ENCODE measurements at regions of chr9 and their contacts with region 1.

Region 1: DNA sequence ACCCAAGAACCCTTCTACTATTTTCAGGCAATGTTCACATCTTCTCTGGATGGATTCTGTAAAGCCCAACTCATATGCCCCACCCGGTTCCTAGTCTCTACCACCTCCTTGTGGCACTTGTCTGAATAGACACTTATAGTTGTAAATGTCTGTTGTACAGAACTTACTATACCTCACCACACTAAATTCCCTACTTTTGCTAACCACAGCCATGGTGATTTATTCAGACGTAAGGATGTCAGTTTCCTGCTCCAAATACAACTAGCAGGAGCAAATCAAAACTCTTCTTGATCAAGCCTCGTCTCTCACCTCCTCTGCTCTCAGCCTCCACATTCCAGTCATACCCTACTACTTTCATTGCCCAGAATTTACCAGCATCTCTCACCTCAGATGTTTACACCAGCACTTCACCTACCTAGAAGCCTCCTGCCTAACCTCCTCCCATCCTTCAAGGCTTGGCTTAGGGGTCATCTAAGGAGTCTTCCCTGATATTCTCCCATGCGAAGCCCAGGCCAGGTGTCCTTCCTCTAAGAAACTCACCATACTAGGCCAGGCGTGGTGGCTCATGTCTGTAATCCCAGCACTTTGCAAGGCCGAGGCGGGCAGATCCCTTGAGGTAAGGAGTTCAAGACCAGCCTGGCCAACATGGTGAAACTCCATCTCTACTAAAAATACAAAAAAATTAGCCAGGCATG is 75.5 kb downstream of the MAPKAP1 start:
- DNase-seq: peak; percentile 38
- H3K4me3 Mint-ChIP-seq: no peak overlapping the region
- H3K27ac Mint-ChIP-seq: peak overlapping the region; percentile 58
- H3K4me1 Mint-ChIP-seq: peaks cover 76% of the 10 kb centered on the region
- H3K27me3 Mint-ChIP-seq: no peaks in the 10 kb centered on the region

Region 2: DNA sequence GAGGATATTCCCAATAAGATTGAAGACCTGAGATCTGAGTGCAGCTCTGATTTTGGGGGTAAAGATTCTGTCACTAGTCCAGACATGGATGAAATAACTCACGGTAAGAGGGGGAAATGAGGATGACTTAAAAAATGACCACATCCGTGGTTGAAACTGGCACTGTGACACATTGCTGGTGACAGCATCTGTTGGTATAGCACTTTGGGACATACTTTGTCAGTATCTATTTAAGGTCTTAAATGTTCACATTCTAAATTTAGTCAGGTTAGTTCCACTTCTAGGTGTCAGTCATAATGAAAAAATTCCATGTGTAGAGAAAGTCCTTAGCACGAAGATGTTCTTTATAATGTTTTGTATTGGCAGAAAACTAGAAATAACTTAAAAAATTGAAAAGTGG is 299.0 kb before region 1 on chr9:
- CTCF ChIA-PET with region 1: no interaction called
- POLR2A ChIA-PET with region 1: no interaction called
- intact Hi-C with region 1: loop called (anchors 1 kb)
- DNase-seq: peak; percentile 69
- H3K4me3 Mint-ChIP-seq: no peak overlapping the region
- H3K27ac Mint-ChIP-seq: peak overlapping the region; percentile 7
- H3K4me1 Mint-ChIP-seq: peaks cover 16% of the 10 kb centered on the region
- H3K27me3 Mint-ChIP-seq: no peaks in the 10 kb centered on the region

Region 3: GRCh38 chr9:125521462-125522327 is 109.8 kb before region 1 on chr9:
- CTCF ChIA-PET with region 1: interaction called, 5 read pairs
- POLR2A ChIA-PET with region 1: interaction called, 4 read pairs
- intact Hi-C with region 1: loop called (anchors 1 kb)
- DNase-seq: peak; percentile 56
- H3K4me3 Mint-ChIP-seq: peak overlapping the region; percentile 52
- H3K27ac Mint-ChIP-seq: peak overlapping the region; percentile 81
- H3K4me1 Mint-ChIP-seq: peaks cover 52% of the 10 kb centered on the region
- H3K27me3 Mint-ChIP-seq: no peaks in the 10 kb centered on the region

Region 4: GRCh38 chr9:125663127-125663526 is 31.6 kb after region 1 on chr9:
- CTCF ChIA-PET with region 1: no interaction called
- POLR2A ChIA-PET with region 1: no interaction called
- intact Hi-C with region 1: loop called (anchors 1 kb)
- DNase-seq: no peak
- H3K4me3 Mint-ChIP-seq: no peak overlapping the region
- H3K27ac Mint-ChIP-seq: no peak overlapping the region
- H3K4me1 Mint-ChIP-seq: peaks cover 12% of the 10 kb centered on the region
- H3K27me3 Mint-ChIP-seq: no peaks in the 10 kb centered on the region

Region 5: DNA sequence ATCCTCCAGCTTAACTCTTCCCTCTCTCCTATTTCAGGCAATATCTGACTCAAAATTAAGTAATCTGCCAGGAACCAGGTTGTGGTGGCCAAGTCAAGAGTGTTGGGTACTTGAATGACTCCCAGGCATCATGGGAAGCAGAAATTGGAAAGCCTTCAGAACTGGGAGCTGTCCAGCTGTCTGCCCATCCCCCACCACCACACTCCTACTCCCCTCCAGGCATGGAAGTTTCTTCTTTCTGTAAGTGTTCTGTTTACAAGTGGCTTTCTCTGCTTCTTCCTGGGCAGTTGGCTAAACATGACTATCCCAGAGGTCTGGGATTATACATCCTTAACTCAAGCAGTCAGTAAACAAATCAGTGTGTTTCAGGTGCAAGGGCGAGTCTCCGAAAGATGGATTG is 101.0 kb after region 1 on chr9:
- CTCF ChIA-PET with region 1: no interaction called
- POLR2A ChIA-PET with region 1: no interaction called
- intact Hi-C with region 1: no loop called
- DNase-seq: no peak
- H3K4me3 Mint-ChIP-seq: no peak overlapping the region
- H3K27ac Mint-ChIP-seq: no peak overlapping the region
- H3K4me1 Mint-ChIP-seq: no peaks in the 10 kb centered on the region
- H3K27me3 Mint-ChIP-seq: peaks cover 1% of the 10 kb centered on the region

Region 6: DNA sequence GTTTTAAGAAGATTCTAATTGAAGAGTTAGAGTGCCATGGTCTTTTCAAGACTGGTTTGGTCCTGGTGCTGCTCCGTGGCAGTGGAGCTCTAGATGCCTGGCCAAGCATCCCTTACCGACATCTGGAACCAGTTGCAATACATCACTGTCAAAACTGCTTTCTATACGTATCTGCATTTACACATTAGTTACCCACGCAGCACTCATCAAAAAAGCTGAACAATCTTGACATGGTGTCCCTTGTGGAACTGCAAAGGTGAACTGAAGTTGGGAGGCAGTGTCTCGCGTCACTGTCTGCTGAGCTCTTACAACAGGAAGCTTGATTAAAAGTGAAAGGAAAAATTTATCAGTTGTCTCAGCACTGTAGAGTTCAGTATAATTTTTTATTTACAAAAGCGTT is 198.2 kb after region 1 on chr9:
- CTCF ChIA-PET with region 1: no interaction called
- POLR2A ChIA-PET with region 1: no interaction called
- intact Hi-C with region 1: loop called (anchors 10 kb)
- DNase-seq: peak; percentile 60
- H3K4me3 Mint-ChIP-seq: peak overlapping the region; percentile 72
- H3K27ac Mint-ChIP-seq: peak overlapping the region; percentile 71
- H3K4me1 Mint-ChIP-seq: peaks cover 21% of the 10 kb centered on the region
- H3K27me3 Mint-ChIP-seq: no peaks in the 10 kb centered on the region

Region 7: GRCh38 chr9:126514047-126514821 is 882.7 kb after region 1 on chr9:
- CTCF ChIA-PET with region 1: no interaction called
- POLR2A ChIA-PET with region 1: no interaction called
- intact Hi-C with region 1: loop called (anchors 2 kb)
- DNase-seq: peak; percentile 67
- H3K4me3 Mint-ChIP-seq: no peak overlapping the region
- H3K27ac Mint-ChIP-seq: no peak overlapping the region
- H3K4me1 Mint-ChIP-seq: peaks cover 31% of the 10 kb centered on the region
- H3K27me3 Mint-ChIP-seq: peaks cover 59% of the 10 kb centered on the region